Activated CD4-positive, alpha-beta memory T cell treated with anti-CD3 and anti-CD28 coated beads, Interleukin-2, amount 10 ng/mL, durations not matched to agents 7 days and 5 days (primary cell): ENCODE measurements at regions of chr1 and their contacts with region 1.

Region 1: DNA sequence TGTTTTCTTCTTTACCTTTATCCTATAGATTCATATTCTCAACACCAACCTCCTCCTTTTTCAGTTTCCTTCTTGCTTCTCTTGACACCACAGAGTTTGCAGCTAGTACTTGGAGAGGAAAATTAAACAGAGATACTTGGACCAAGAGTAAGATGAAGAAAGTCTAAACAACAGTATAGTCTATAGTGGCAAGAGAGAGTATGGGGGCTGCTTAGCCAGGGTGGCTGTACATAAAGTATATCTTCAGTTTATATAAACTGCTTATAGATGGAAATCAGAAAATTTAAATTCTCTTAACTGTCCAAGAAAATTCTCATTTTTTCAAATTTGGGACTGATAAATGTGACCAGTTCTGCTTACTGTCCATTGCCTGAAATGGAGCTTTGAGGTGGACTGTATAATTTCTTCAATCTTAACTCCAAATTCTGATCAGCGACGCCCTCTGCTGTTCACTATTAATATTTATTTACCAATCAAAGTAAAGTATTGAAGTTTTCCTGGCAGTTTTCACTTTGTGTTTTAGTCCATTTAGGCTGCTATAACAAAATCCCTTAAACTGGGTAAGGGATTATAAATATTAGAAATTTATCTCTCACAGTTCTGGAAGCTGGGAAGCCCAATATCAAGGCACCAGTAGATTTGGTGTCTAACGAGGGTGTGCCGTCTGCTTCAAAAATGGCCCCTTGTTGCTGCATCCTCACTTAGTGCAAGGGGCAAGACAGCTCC is 14.8 kb upstream of the METTL18 start:
- DNase-seq: no peak
- H3K4me3 Mint-ChIP-seq: no peak overlapping the region
- H3K27ac Mint-ChIP-seq: no peak overlapping the region
- H3K4me1 Mint-ChIP-seq: peaks cover 8% of the 10 kb centered on the region
- H3K27me3 Mint-ChIP-seq: no peaks in the 10 kb centered on the region

Region 2: GRCh38 chr1:169833179-169833901 is 23.8 kb after region 1 on chr1:
- CTCF ChIA-PET with region 1: interaction called, 10 read pairs
- POLR2A ChIA-PET with region 1: no interaction called
- DNase-seq: no peak
- H3K4me3 Mint-ChIP-seq: no peak overlapping the region
- H3K27ac Mint-ChIP-seq: no peak overlapping the region
- H3K4me1 Mint-ChIP-seq: peaks cover 7% of the 10 kb centered on the region
- H3K27me3 Mint-ChIP-seq: no peaks in the 10 kb centered on the region